ENCODE measurements at regions of chr11 and their contacts with region 1.

Region 1: GRCh38 chr11:61947486-61948210 is 2.5 kb upstream of the BEST1 start:
- DNase-seq: no peak
- H3K4me3 ChIP-seq: no peak overlapping the region
- H3K27ac ChIP-seq: no peak overlapping the region
- H3K4me1 ChIP-seq: peaks cover 0 to 30% (median 7%) of the 10 kb centered on the region in 3 donors
- H3K27me3 ChIP-seq: peaks cover 0 to 5% (median 0%) of the 10 kb centered on the region in 4 donors
- CTCF ChIP-seq: peak; percentile 73 to 91 (median 87)
- POLR2A ChIP-seq: no peak

Region 2: GRCh38 chr11:61792310-61793085 is 155.2 kb before region 1 on chr11 and contains the starts of genes FEN1 and TMEM258:
- intact Hi-C with region 1: loop called (anchors 5 kb)
- DNase-seq: peak; percentile 62
- H3K4me3 ChIP-seq: peak within 1 kb of the TSS; percentile 49 to 89 (median 76)
- H3K27ac ChIP-seq: peak within 1 kb of the TSS; percentile 89 to 99 (median 95)
- H3K4me1 ChIP-seq: peaks cover 12 to 44% (median 20%) of the 10 kb centered on the region in 3 donors
- H3K27me3 ChIP-seq: no peaks in the 10 kb centered on the region
- CTCF ChIP-seq: peak in 3 of 6 experiments; percentile 3 to 29 (median 27)
- POLR2A ChIP-seq: peak in 2 of 4 donors; percentile 36 to 69
- total RNA-seq, gene FEN1: 11.4 to 38.1 (median 23.5) TPM
- total RNA-seq, gene TMEM258: 32.3 to 54.2 (median 37.9) TPM

Region 3: DNA sequence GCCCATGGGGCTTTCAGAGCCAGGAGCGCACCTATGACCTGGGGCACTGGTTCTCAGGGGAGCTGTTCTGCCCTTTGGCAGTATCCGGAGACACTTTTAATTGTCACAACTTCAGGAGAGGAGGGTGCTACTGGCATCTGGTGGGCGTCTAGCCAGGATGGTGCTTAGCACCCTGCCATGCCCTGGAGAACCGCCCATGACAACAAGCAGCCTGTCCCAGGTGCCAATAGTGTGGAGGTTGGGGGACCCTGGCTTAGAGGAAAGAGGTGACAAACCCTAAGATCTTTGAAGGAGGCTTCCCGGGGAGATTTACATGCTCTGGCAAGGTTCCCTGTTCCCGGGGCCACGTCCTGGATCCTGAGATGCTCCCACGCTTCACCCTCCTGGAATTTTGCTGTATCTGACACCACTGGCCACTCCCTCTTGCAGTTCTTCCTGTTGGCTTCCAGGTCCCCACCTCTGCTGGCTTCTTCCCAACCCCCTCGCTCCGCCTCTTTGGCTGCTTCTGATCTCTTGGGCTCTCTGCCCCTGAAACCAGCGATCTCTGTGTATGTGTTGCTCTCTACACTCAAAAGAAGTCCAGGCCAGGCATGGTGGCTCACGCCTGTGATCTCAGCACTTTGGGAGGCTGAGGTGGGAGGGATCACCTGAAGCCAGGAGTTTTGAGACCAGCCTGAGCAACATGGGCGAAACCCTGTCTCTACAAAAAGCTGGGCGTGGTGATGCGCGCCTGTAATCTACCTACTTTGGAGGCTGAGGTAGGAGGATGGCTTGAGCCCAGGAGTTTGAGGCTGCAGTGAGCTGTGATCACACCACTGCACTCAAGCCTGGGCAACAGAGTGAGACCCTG is 87.4 kb before region 1 on chr11:
- intact Hi-C with region 1: no loop called
- DNase-seq: no peak
- H3K4me3 ChIP-seq: no peak overlapping the region
- H3K27ac ChIP-seq: no peak overlapping the region
- H3K4me1 ChIP-seq: peaks cover 0 to 8% (median 0%) of the 10 kb centered on the region in 3 donors
- H3K27me3 ChIP-seq: no peaks in the 10 kb centered on the region
- CTCF ChIP-seq: no peak
- POLR2A ChIP-seq: no peak

Region 4: GRCh38 chr11:61899146-61899841 is 48.4 kb before region 1 on chr11:
- intact Hi-C with region 1: loop called (anchors 5 kb)
- DNase-seq: peak; percentile 49
- H3K4me3 ChIP-seq: no peak overlapping the region
- H3K27ac ChIP-seq: peak overlapping the region in 2 of 4 donors; percentile 16 to 34
- H3K4me1 ChIP-seq: peaks cover 0 to 21% (median 0%) of the 10 kb centered on the region in 3 donors
- H3K27me3 ChIP-seq: peaks cover 0 to 4% (median 0%) of the 10 kb centered on the region in 4 donors
- CTCF ChIP-seq: peak; percentile 98 to 100 (median 100)
- POLR2A ChIP-seq: no peak

Region 5: DNA sequence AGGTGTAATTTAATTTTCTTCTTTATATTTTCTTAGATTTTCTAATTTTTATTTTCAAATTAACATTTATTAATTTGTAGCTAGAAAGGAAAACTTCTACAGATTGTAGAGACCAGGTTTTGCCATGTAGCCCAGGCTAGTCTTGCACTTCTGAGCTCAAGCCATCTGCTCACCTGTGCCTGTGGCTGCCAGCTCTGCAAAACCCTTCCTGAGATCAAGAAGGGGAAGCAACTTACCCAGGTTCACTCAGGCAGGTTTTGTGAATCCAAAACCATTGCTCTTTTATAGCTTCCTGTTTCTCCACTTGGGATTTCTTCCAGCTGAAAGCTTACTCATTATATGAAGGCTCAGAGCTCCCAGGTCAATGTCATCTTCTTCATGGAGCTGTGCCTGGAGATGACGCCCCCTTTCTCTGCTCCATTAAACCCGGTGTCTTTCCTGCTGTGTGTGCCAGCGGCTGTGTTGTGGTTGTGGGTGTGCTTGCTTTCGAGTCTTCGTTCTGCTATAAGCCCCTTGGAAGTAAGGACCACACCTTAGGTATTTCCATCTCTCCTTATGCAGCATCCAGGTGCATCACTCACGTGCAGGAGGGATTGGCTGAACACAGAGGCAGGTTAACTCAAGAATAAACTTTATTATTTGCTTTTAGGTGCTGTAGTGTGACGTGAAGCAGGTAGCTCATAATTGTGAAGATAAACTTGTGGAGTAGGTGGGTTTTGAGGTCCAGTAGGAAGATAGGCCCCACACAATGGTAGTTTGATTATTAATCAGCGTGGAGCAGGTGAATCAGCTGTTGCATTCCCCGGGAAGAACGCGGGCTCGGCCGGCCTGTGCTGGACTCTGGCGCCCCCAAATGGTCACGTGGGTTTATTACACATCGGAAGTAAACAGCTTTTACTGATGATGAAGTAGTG is 134.0 kb after region 1 on chr11:
- intact Hi-C with region 1: loop called (anchors 5 kb)
- DNase-seq: no peak
- H3K4me3 ChIP-seq: no peak overlapping the region
- H3K27ac ChIP-seq: no peak overlapping the region
- H3K4me1 ChIP-seq: peaks cover 0 to 8% (median 0%) of the 10 kb centered on the region in 3 donors
- H3K27me3 ChIP-seq: no peaks in the 10 kb centered on the region
- CTCF ChIP-seq: peak; percentile 84 to 94 (median 89)
- POLR2A ChIP-seq: no peak

Region 6: DNA sequence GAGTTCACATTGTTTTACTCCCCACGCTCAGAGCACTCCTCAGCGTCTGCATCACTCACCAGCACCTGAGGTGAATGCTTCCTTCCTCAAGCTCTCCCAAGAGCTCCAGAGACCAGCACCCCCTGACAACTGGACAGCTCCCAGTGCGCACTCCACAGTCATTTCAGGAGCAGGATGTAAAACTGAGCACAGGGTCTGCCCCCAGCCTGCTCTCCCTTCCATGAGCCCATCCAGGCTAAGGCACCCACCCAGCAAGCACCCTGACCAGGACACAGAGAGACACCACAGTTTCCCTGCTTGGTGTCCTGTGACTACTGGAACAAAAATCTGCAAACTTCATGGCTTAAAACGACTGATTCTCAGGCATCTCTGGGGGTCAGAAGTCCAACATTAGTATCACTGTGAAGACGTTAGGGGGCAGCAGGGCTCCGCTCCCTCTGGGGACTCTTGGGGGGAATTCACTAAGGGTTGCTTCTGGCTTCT is 297.7 kb after region 1 on chr11:
- intact Hi-C with region 1: no loop called
- DNase-seq: no peak
- H3K4me3 ChIP-seq: no peak overlapping the region
- H3K27ac ChIP-seq: no peak overlapping the region
- H3K4me1 ChIP-seq: peaks cover 0 to 13% (median 0%) of the 10 kb centered on the region in 3 donors
- H3K27me3 ChIP-seq: peaks cover 0 to 66% (median 0%) of the 10 kb centered on the region in 4 donors
- CTCF ChIP-seq: no peak
- POLR2A ChIP-seq: no peak